ENCODE measurements at regions of chr3 and their contacts with region 1.

Region 1: GRCh38 chr3:128123538-128124368 is at the start of gene RUVBL1:
- DNase-seq: peak; percentile 98
- H3K4me3 Mint-ChIP-seq: peak within 1 kb of the TSS; percentile 97
- H3K27ac Mint-ChIP-seq: peak within 1 kb of the TSS; percentile 95
- H3K4me1 Mint-ChIP-seq: peaks cover 23% of the 10 kb centered on the region
- H3K27me3 Mint-ChIP-seq: no peaks in the 10 kb centered on the region
- CTCF ChIP-seq: no peak
- total RNA-seq, gene RUVBL1: 88.1 and 114 TPM in 2 replicates

Region 2: GRCh38 chr3:127915115-127915936 is 208.4 kb before region 1 on chr3 and contains the start of gene KBTBD12:
- CTCF ChIA-PET with region 1: no interaction called
- POLR2A ChIA-PET with region 1: no interaction called
- intact Hi-C with region 1: no loop called
- DNase-seq: no peak
- H3K4me3 Mint-ChIP-seq: no peak within 1 kb of the TSS
- H3K27ac Mint-ChIP-seq: no peak within 1 kb of the TSS
- H3K4me1 Mint-ChIP-seq: peaks cover 13% of the 10 kb centered on the region
- H3K27me3 Mint-ChIP-seq: no peaks in the 10 kb centered on the region
- CTCF ChIP-seq: no peak
- total RNA-seq, gene KBTBD12: not detected in 2 replicates

Region 3: DNA sequence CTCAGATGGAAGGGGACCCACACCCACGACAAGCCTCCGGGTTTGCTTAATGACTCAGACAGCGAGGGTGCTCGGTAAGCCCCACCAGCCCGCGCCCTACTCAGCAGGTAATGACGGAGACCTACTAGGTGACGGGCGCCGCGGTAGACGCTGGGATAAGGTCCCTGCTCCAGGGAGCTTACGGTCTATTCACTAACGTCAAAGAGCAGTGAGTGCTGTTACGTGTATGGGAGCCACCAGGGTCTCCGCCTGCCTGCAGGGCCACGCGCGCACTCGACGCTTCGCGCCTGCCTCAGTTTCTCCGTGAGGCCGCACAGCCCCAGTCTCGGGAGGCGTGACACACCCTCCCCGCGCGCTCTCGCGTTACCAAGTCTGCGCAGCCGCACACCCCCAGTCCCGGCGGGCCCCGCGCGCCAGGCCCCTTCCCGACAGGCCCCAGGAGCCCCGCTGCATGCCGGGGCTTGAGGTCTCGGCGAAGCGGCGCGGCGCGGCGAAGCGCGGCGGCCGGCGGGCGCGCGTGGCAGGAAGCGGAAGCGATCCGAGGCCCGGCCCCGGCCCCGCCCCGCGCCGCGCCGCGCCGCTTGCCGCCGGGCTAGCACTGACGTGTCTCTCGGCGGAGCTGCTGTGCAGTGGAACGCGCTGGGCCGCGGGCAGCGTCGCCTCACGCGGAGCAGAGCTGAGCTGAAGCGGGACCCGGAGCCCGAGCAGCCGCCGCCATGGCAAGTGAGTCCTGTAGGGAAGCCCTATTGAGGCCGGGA is 71.7 kb before region 1 on chr3 and contains the start of gene SEC61A1:
- CTCF ChIA-PET with region 1: interaction called, 3 read pairs
- POLR2A ChIA-PET with region 1: interaction called, 10 read pairs
- intact Hi-C with region 1: no loop called
- DNase-seq: peak; percentile 93
- H3K4me3 Mint-ChIP-seq: peak within 1 kb of the TSS; percentile 100
- H3K27ac Mint-ChIP-seq: peak within 1 kb of the TSS; percentile 92
- H3K4me1 Mint-ChIP-seq: peaks cover 37% of the 10 kb centered on the region
- H3K27me3 Mint-ChIP-seq: no peaks in the 10 kb centered on the region
- CTCF ChIP-seq: no peak
- total RNA-seq, gene SEC61A1: 418 and 519 TPM in 2 replicates

Region 4: DNA sequence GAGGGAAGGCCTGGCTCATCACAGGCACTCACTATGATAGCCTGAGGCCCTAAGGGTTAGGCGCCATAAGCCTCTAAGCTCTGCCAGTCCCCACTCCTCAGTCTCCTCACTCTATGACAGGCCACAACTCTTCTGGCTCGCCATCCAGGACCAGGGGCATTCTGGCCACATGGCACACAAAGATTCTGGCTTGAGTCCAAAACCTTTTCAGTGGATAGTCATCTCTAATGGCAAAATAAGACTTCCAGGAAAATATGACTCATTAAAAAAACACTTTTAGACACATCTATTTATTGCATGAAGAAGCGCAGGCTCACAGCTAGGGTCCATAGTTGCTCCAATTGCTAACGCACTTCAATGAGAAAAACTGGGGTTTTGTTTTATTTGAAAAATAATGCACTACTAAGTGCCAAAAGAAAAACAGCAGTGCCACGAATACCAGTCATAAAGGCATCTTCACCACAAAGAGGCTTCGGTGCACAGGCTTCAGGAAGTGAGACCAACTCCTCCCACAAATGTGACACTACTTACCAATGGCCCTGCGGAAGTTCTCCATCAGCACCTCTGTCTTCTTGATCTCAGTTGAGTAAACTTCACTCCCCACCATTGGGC is 11.3 kb before region 1 on chr3:
- CTCF ChIA-PET with region 1: interaction called, 3 read pairs
- POLR2A ChIA-PET with region 1: interaction called, 62 read pairs
- intact Hi-C with region 1: loop called (anchors 1 kb)
- DNase-seq: peak; percentile 97
- H3K4me3 Mint-ChIP-seq: no peak overlapping the region
- H3K27ac Mint-ChIP-seq: peak overlapping the region; percentile 33
- H3K4me1 Mint-ChIP-seq: peaks cover 25% of the 10 kb centered on the region
- H3K27me3 Mint-ChIP-seq: no peaks in the 10 kb centered on the region
- CTCF ChIP-seq: no peak

Region 5: GRCh38 chr3:128153156-128154041 is 29.6 kb after region 1 on chr3 and contains the start of gene EEFSEC:
- CTCF ChIA-PET with region 1: interaction called, 4 read pairs
- POLR2A ChIA-PET with region 1: interaction called, 40 read pairs
- intact Hi-C with region 1: loop called (anchors 1 kb)
- DNase-seq: peak; percentile 76
- H3K4me3 Mint-ChIP-seq: peak within 1 kb of the TSS; percentile 87
- H3K27ac Mint-ChIP-seq: peak within 1 kb of the TSS; percentile 76
- H3K4me1 Mint-ChIP-seq: peaks cover 6% of the 10 kb centered on the region
- H3K27me3 Mint-ChIP-seq: no peaks in the 10 kb centered on the region
- CTCF ChIP-seq: no peak
- total RNA-seq, gene EEFSEC: 12.2 and 14.6 TPM in 2 replicates

Measured in MCF 10A (cell line).